ENCODE measurements at regions of chr20 and their contacts with region 1.

Region 1: GRCh38 chr20:53773792-53774401 is 180.3 kb upstream of the ZNF217 start:
- DNase-seq: peak; percentile 96
- H3K4me3 ChIP-seq: peak overlapping the region; percentile 35
- H3K27ac ChIP-seq: peak overlapping the region; percentile 99
- H3K4me1 ChIP-seq: peaks cover 26% of the 10 kb centered on the region
- H3K27me3 ChIP-seq: no peaks in the 10 kb centered on the region

Region 2: GRCh38 chr20:53691060-53691810 is 82.7 kb before region 1 on chr20:
- in situ Hi-C with region 1: no loop called
- DNase-seq: peak; percentile 21
- H3K4me3 ChIP-seq: no peak overlapping the region
- H3K27ac ChIP-seq: no peak overlapping the region
- H3K4me1 ChIP-seq: peaks cover 15% of the 10 kb centered on the region
- H3K27me3 ChIP-seq: no peaks in the 10 kb centered on the region

Region 3: GRCh38 chr20:53805895-53806384 is 32.0 kb after region 1 on chr20:
- in situ Hi-C with region 1: no loop called
- DNase-seq: peak; percentile 92
- H3K4me3 ChIP-seq: no peak overlapping the region
- H3K27ac ChIP-seq: peak overlapping the region; percentile 91
- H3K4me1 ChIP-seq: peaks cover 16% of the 10 kb centered on the region
- H3K27me3 ChIP-seq: no peaks in the 10 kb centered on the region

Region 4: GRCh38 chr20:53828682-53829254 is 54.9 kb after region 1 on chr20:
- in situ Hi-C with region 1: loop called (anchors 10 kb)
- DNase-seq: peak; percentile 94
- H3K4me3 ChIP-seq: peak overlapping the region; percentile 72
- H3K27ac ChIP-seq: peak overlapping the region; percentile 100
- H3K4me1 ChIP-seq: peaks cover 40% of the 10 kb centered on the region
- H3K27me3 ChIP-seq: no peaks in the 10 kb centered on the region

Region 5: GRCh38 chr20:54633374-54634355 is 859.8 kb after region 1 on chr20:
- in situ Hi-C with region 1: no loop called
- DNase-seq: no peak
- H3K4me3 ChIP-seq: no peak overlapping the region
- H3K27ac ChIP-seq: no peak overlapping the region
- H3K4me1 ChIP-seq: no peaks in the 10 kb centered on the region
- H3K27me3 ChIP-seq: no peaks in the 10 kb centered on the region